Right cardiac atrium (tissue), 5 donors: ENCODE measurements at regions of chr10 and their contacts with region 1.

Region 1: GRCh38 chr10:6163364-6164270 is 39.1 kb upstream of the PFKFB3 start:
- DNase-seq: peak; percentile 92 to 97 (median 96)
- ATAC-seq: peak; percentile 99
- H3K4me3 ChIP-seq: peak overlapping the region; percentile 55
- H3K27ac ChIP-seq: peak overlapping the region; percentile 91
- H3K4me1 ChIP-seq: peaks cover 9% of the 10 kb centered on the region
- H3K27me3 ChIP-seq: no peaks in the 10 kb centered on the region

Region 2: DNA sequence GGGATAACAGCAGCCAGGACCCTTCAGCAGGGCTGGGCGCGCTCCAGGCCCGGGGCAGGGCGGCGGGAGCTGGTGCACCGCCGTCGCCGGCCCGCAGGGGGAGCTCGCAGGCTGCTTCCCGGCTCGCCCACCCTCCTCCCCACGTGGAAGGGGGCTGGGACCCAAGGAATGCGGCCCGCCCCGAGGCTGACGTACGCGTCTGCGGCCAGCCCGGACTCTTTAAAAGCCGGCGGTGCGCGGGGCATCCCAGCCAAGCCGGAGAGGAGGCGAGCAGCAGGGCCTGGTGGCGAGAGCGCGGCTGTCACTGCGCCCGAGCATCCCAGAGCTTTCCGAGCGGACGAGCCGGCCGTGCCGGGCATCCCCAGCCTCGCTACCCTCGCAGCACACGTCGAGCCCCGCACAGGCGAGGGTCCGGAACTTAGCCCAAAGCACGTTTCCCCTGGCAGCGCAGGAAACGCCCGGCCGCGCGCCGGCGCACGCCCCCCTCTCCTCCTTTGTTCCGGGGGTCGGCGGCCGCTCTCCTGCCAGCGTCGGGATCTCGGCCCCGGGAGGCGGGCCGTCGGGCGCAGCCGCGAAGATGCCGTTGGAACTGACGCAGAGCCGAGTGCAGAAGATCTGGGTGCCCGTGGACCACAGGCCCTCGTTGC is 39.2 kb after region 1 on chr10 and contains the start of gene PFKFB3:
- intact Hi-C with region 1: loop called in 1 of 4 experiments (anchors 5 kb)
- DNase-seq: peak; percentile 96 to 99 (median 98)
- ATAC-seq: peak; percentile 96
- H3K4me3 ChIP-seq: peak within 1 kb of the TSS; percentile 63
- H3K27ac ChIP-seq: peak within 1 kb of the TSS; percentile 53
- H3K4me1 ChIP-seq: peaks cover 9% of the 10 kb centered on the region
- H3K27me3 ChIP-seq: no peaks in the 10 kb centered on the region
- total RNA-seq, gene PFKFB3: 10.5 to 15.1 (median 11.7) TPM

Region 3: DNA sequence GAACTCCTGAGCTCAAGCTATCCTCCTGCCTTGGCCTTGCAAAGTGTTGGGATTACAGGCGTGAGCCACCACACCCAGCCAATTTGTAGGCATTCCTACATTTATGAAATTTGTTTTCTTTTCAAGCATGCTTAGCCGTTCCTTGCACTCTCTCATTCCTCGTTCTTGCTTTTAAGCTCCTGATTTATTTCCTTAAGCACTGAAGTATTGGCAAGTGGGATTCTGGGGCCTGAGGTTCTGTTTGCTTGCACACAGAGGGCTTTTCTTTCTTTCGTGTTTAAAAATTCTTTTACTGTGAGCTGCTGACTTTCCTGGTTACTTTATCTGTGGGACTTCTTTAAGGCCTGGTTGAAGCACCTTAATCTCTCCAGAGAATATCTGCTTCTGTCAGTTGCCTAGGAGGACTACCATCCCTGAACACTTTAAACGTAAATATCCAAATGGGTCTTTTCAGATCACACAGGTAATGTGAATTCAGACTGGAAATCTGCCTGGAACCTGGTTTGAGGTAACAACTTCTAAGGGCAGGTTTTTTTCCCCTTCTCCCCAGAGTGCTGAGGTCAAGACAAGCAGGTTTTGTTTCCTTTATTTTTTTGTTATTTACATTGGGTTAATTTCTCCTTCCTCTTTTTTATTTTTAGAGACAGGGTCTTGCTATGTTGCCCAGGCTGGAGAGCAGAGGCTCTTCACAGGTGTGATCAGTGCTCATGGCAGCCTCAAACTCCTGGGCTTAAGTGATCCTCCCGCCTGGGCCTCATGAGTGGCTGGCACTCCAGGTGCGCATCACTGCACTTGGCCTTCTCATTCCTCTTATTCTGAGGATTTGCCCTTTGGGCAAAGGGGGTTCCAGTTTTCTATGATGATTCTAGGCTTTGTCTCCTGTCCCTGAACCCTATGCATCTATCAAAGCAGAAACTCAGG is 142.0 kb after region 1 on chr10:
- intact Hi-C with region 1: no loop called
- DNase-seq: no peak
- ATAC-seq: no peak
- H3K4me3 ChIP-seq: no peak overlapping the region
- H3K27ac ChIP-seq: no peak overlapping the region
- H3K4me1 ChIP-seq: no peaks in the 10 kb centered on the region
- H3K27me3 ChIP-seq: no peaks in the 10 kb centered on the region